Activated naive CD4-positive, alpha-beta T cell treated with anti-CD3 and anti-CD28 coated beads for 36 hours (primary cell): ENCODE measurements at regions of chr3 and their contacts with region 1.

Region 1: DNA sequence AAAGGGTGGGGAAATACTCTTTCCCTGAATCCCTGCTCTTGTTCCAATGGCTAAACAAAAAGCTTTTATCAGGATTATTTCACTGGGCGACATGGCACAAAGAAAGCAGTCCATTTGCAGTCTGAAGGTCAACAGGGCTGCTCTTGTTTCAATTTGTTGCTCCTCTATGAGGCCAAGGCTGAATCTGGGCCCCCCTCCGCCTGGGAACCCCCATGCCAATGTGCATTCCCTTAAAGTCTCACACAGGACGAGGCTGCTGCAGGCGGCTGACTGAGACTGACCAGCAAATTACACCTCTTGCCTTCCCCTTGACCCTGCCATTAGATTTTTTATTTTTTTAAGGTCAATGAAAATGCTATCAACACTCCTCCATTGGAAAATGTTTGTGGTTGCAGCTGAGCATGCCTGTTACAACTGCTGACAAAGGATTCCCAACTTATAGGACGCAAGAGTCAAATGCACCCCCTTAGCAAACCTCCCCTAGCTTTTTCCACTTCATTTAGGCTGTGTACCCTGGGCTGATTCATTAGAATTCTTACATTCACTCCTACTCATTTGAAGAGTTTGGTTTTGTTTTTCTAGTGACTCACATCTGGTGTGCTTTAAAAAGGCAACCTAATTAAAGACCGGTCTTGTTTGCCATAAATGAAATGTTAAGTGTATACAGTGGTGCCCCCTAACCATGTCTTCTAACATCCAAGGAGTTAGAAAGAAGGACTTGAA is 60.8 kb upstream of the ARHGEF3 start:
- DNase-seq: peak; percentile 46
- H3K4me3 Mint-ChIP-seq: no peak overlapping the region
- H3K27ac Mint-ChIP-seq: peak overlapping the region; percentile 76
- H3K4me1 Mint-ChIP-seq: peaks cover 73% of the 10 kb centered on the region
- H3K27me3 Mint-ChIP-seq: no peaks in the 10 kb centered on the region

Region 2: DNA sequence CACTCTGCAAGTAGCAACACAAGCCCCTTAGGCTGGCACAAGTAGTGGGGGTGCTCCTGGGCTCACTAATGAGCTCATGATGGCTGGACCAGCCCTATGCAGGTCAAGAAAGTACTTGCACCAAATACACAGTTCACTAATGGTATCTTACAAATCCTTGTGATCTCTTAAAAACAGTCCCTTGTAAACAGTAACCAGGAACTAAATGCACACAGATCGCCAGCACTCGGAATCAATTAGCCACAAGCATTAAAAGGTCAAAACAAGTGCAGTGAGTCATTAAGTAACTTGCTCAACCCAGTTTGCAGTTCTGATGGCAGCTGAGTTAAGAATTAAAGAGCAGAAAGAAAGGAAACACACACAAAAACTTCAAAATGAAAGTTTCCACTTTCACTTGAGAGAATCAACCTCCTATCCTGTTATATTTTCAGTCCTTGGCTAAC is 104.0 kb before region 1 on chr3:
- CTCF ChIA-PET with region 1: no interaction called
- intact Hi-C with region 1: loop called (anchors 1 kb)
- DNase-seq: peak; percentile 65
- H3K4me3 Mint-ChIP-seq: peak overlapping the region; percentile 55
- H3K27ac Mint-ChIP-seq: peak overlapping the region; percentile 85
- H3K4me1 Mint-ChIP-seq: peaks cover 82% of the 10 kb centered on the region
- H3K27me3 Mint-ChIP-seq: no peaks in the 10 kb centered on the region

Region 3: GRCh38 chr3:56878074-56878473 is 15.6 kb after region 1 on chr3:
- CTCF ChIA-PET with region 1: interaction called, 4 read pairs
- intact Hi-C with region 1: loop called (anchors 1 kb)
- DNase-seq: peak; percentile 84
- H3K4me3 Mint-ChIP-seq: peak overlapping the region; percentile 52
- H3K27ac Mint-ChIP-seq: peak overlapping the region; percentile 94
- H3K4me1 Mint-ChIP-seq: peaks cover 90% of the 10 kb centered on the region
- H3K27me3 Mint-ChIP-seq: no peaks in the 10 kb centered on the region

Region 4: DNA sequence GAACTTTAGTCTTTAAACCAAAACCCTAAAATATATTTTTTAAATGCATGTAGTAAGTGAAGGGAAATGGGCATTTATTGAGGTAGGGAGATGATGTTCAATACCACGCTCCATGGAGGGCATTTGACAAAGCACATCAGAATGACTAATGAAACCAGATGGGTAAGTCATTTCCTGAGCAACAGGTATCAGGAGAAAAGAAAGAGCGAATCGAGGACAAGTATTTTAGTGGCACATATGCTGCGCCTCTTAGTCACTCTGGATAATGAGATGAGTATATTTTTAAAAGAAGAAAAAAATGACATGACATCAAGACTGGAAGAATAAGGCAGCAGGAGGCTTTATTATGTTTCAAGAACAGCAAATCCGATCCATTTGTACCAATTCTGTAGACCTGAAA is 68.2 kb after region 1 on chr3:
- CTCF ChIA-PET with region 1: interaction called, 3 read pairs
- intact Hi-C with region 1: loop called (anchors 1 kb)
- DNase-seq: peak; percentile 60
- H3K4me3 Mint-ChIP-seq: no peak overlapping the region
- H3K27ac Mint-ChIP-seq: peak overlapping the region; percentile 81
- H3K4me1 Mint-ChIP-seq: peaks cover 65% of the 10 kb centered on the region
- H3K27me3 Mint-ChIP-seq: no peaks in the 10 kb centered on the region